PC-9 (cell line): ENCODE measurements at regions of chr12 and their contacts with region 1.

Region 1: GRCh38 chr12:8609061-8609570 is 3.5 kb downstream of the AICDA start:
- DNase-seq: peak in 1 of 2 experiments; percentile 33
- H3K4me3 ChIP-seq: peak overlapping the region; percentile 28; the same call in 1 of the 2 replicates
- H3K27ac ChIP-seq: no peak overlapping the region
- H3K4me1 ChIP-seq: no peaks in the 10 kb centered on the region
- H3K27me3 ChIP-seq: peaks cover 8% of the 10 kb centered on the region; the same call in 1 of the 2 replicates
- CTCF ChIP-seq: peak; percentile 80

Region 2: DNA sequence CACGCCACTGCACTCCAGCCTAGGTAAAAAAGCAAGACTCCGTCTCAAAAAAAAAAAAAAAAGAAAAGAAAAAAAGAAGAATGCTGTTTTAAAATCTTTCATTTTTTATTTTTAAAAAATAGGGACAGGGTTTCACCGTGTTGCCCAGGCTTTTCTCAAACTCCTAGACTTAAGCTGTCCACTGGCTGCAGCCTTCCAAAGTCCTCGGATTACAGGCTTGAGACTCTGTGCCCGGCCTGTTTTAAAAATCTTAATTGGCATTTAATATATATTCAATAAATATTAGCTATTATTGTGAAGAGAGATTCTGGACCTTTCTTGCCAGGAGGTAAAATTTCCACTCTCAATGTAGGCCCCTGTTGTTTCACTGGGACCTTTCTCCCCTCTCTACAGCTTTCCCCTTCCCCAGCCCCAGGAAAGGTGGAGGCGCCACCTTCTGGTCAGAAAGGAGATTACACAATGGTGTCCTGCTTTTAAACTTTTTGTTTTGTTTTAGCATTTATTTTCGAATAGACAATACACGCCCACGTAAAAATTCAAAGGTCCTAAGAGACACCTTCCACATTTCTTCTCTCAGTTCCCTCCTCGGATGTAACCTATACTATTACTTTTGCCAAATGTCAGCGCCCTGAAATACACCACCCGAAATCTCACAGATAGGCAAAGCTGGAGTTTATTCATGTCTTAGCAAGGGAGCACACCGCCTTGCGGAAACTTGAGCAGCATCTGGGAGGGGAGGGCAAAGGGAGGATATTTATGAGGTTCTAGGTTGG is 281.4 kb after region 1 on chr12:
- CTCF ChIA-PET with region 1: no interaction called
- POLR2A ChIA-PET with region 1: interaction called, 11 read pairs
- intact Hi-C with region 1: no loop called
- DNase-seq: peak in 1 of 2 experiments; percentile 63
- H3K4me3 ChIP-seq: peak overlapping the region; percentile 43; the same call in 1 of the 2 replicates
- H3K27ac ChIP-seq: no peak overlapping the region
- H3K4me1 ChIP-seq: 0 out of 2 replicates have a peak, but pooled peaks cover 3% of the 10 kb centered on the region
- H3K27me3 ChIP-seq: no peaks in the 10 kb centered on the region
- CTCF ChIP-seq: peak; percentile 95